Aorta (tissue), 5 donors: ENCODE measurements at regions of chr9 and their contacts with region 1.

Region 1: DNA sequence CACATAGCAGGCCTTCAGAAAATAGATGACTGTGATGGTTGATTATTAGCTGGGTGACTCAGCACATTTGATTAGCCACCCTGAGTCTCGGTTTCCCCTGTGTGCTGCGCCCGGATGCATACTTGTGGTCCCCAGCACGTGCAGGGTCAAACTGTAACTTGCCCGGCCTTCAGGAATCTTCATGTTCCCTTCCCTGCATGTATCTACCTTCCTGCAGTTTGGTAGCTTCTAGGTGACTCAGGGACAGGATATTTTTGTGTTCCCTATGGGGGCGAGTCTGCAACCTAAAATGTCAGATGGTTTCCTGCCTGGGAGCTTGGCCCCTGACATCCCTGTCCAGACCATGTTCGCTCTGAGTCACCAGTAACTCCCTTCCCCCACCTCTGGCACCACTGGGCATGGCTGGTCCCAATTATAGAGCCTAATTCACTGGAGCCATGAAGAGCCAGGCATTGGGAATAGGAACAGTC is 13.2 kb downstream of the PTGS1 start:
- DNase-seq: peak in 1 of 2 donors; percentile 78
- ATAC-seq: peak; percentile 50
- H3K4me3 ChIP-seq: no peak overlapping the region
- H3K27ac ChIP-seq: no peak overlapping the region
- H3K4me1 ChIP-seq: no peaks in the 10 kb centered on the region
- H3K27me3 ChIP-seq: no peaks in the 10 kb centered on the region

Region 2: DNA sequence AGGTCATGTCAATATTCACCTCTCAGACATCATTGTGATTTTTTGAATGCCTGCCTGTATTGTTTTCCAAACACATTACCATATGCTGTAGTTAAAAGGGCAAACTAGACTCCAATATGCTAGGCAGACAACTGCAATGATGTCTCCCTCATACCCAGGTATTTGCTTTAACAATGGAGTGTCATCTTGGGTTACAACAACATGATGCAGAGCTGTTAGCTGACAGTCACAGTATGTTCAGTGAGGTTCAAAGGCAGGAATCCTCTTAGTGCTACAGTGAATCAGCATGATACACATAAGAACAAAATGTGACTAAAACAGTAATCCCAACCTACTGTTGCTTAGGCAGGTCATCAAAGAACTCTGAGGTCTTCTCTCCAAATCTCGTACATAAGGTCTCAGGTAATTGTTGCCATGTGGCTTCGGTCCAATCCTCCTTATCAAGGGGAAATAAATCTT is 69.7 kb after region 1 on chr9:
- intact Hi-C with region 1: loop called in 1 of 2 experiments (anchors 5 kb)
- DNase-seq: no peak
- ATAC-seq: no peak
- H3K4me3 ChIP-seq: no peak overlapping the region
- H3K27ac ChIP-seq: no peak overlapping the region
- H3K4me1 ChIP-seq: no peaks in the 10 kb centered on the region
- H3K27me3 ChIP-seq: peaks cover 0 to 2% of the 10 kb centered on the region in 2 donors